CD8-positive, alpha-beta T cell (primary cell): ENCODE measurements at regions of chr12 and their contacts with region 1.

Region 1: DNA sequence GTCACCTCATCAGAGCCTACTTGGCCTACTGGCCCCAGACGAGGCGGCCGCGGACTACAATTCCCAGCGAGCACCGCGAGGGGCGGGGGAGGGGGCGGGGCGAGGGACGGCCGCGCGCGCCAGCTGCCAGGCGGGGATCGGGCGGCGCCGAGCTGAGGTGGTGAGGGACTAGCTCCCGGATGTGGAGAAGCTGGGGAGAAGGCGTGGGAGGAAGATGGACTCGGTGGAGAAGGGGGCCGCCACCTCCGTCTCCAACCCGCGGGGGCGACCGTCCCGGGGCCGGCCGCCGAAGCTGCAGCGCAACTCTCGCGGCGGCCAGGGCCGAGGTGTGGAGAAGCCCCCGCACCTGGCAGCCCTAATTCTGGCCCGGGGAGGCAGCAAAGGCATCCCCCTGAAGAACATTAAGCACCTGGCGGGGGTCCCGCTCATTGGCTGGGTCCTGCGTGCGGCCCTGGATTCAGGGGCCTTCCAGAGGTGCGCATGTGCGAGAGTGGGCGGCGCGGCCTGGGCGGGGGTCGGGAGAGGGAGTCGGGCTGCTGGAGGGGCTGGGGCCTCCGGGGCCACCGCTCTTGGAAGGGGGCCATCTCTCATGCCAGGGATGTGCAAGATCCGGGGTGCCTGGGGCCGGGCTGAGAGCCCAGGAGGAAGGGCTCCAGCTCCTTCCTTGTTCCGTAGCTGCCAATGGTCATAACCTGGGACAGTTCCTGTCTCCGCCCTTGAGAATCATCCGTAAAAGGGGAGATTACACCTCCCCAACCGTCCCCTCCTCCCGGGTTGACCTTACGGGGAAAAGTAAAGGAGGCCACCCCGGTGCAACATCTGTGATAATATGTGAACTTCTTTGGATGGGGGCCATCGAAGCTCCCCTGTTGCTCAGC is at the start of gene CMAS:
- DNase-seq: peak; percentile 63 to 89 (median 78)
- ATAC-seq: peak; percentile 90
- H3K4me3 ChIP-seq: peak within 1 kb of the TSS; percentile 71 to 91
- H3K4me3 Mint-ChIP-seq: peak within 1 kb of the TSS; percentile 95
- H3K27ac ChIP-seq: peak within 1 kb of the TSS; percentile 56 to 65
- H3K27ac Mint-ChIP-seq: peak within 1 kb of the TSS; percentile 91
- H3K4me1 ChIP-seq: peaks cover 16% of the 10 kb centered on the region
- H3K4me1 Mint-ChIP-seq: peaks cover 43% of the 10 kb centered on the region
- H3K27me3 ChIP-seq: peaks cover 0 to 2% of the 10 kb centered on the region in 2 experiments
- H3K27me3 Mint-ChIP-seq: no peaks in the 10 kb centered on the region
- CTCF ChIP-seq: no peak
- total RNA-seq, gene CMAS: 4.4 to 7.7 TPM

Region 2: DNA sequence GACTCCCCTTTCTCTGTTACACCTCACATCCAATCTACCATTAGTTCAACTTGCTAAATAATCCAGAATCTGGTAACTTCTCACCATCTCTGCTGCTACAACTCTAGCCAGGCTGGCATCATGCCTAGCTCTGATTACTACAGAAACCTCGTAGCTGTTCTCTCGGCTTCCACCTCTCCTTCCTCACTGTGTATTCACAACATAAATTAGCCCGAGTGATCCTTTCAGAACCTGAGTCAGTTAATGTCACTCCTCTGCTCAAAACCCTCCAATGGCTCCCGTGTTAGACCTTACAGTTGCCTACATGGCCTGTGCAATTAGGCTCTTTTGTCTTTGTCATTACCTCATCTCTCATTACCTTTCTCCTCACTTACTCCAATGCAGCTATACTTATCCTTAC is 1538.6 kb before region 1 on chr12:
- CTCF ChIA-PET with region 1: no interaction called
- POLR2A ChIA-PET with region 1: no interaction called
- intact Hi-C with region 1: no loop called
- DNase-seq: no peak
- ATAC-seq: no peak
- H3K4me3 ChIP-seq: no peak overlapping the region
- H3K4me3 Mint-ChIP-seq: no peak overlapping the region
- H3K27ac ChIP-seq: no peak overlapping the region
- H3K27ac Mint-ChIP-seq: no peak overlapping the region
- H3K4me1 ChIP-seq: no peaks in the 10 kb centered on the region
- H3K4me1 Mint-ChIP-seq: no peaks in the 10 kb centered on the region
- H3K27me3 ChIP-seq: no peaks in the 10 kb centered on the region
- H3K27me3 Mint-ChIP-seq: no peaks in the 10 kb centered on the region
- CTCF ChIP-seq: no peak

Region 3: GRCh38 chr12:21438643-21439042 is 607.7 kb before region 1 on chr12:
- CTCF ChIA-PET with region 1: no interaction called
- POLR2A ChIA-PET with region 1: no interaction called
- intact Hi-C with region 1: loop called in 1 of 2 experiments (anchors 5 kb)
- DNase-seq: peak in 1 of 9 experiments; percentile 27
- ATAC-seq: no peak
- H3K4me3 ChIP-seq: peak overlapping the region; percentile 91 to 95
- H3K4me3 Mint-ChIP-seq: peak overlapping the region; percentile 98
- H3K27ac ChIP-seq: peak overlapping the region; percentile 86 to 89
- H3K27ac Mint-ChIP-seq: peak overlapping the region; percentile 97
- H3K4me1 ChIP-seq: peaks cover 37% of the 10 kb centered on the region
- H3K4me1 Mint-ChIP-seq: peaks cover 46% of the 10 kb centered on the region
- H3K27me3 ChIP-seq: no peaks in the 10 kb centered on the region
- H3K27me3 Mint-ChIP-seq: no peaks in the 10 kb centered on the region
- CTCF ChIP-seq: no peak

Region 4: GRCh38 chr12:21501379-21501956 is 544.9 kb before region 1 on chr12 and contains the starts of genes GOLT1B and RECQL:
- CTCF ChIA-PET with region 1: no interaction called
- POLR2A ChIA-PET with region 1: no interaction called
- intact Hi-C with region 1: loop called (anchors 1 to 5 kb)
- DNase-seq: peak; percentile 74 to 98 (median 88)
- ATAC-seq: peak; percentile 94
- H3K4me3 ChIP-seq: peak within 1 kb of the TSS; percentile 89 to 95
- H3K4me3 Mint-ChIP-seq: no peak within 1 kb of the TSS
- H3K27ac ChIP-seq: peak within 1 kb of the TSS; percentile 83 to 84
- H3K27ac Mint-ChIP-seq: no peak within 1 kb of the TSS
- H3K4me1 ChIP-seq: peaks cover 35% of the 10 kb centered on the region
- H3K4me1 Mint-ChIP-seq: peaks cover 60% of the 10 kb centered on the region
- H3K27me3 ChIP-seq: no peaks in the 10 kb centered on the region
- H3K27me3 Mint-ChIP-seq: no peaks in the 10 kb centered on the region
- CTCF ChIP-seq: no peak
- total RNA-seq, gene GOLT1B: 45.2 to 52.9 TPM
- total RNA-seq, gene RECQL: 9.9 to 14.6 TPM

Region 5: DNA sequence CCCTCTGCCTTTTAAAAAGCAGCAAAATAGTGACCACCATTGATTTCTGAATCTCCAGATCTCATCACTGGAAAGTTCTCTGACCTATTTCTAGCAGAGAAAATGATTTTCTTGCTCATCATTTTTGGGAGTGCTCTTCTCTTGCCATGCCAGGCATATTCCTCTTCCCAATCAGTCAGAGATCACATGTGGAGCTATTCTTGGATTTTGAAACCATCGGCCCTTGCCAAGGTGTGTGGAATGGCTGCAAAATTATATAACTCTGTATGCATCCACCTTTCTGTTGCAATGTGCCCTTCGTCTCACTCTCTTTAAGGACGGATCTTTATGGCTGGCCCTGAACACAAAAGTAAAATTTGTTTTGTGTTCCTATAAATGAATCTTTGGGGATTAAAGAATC is 363.2 kb before region 1 on chr12:
- CTCF ChIA-PET with region 1: interaction called, 3 read pairs
- POLR2A ChIA-PET with region 1: no interaction called
- intact Hi-C with region 1: loop called in 1 of 2 experiments (anchors 10 kb)
- DNase-seq: no peak
- ATAC-seq: no peak
- H3K4me3 ChIP-seq: no peak overlapping the region
- H3K4me3 Mint-ChIP-seq: no peak overlapping the region
- H3K27ac ChIP-seq: no peak overlapping the region
- H3K27ac Mint-ChIP-seq: no peak overlapping the region
- H3K4me1 ChIP-seq: peaks cover 22% of the 10 kb centered on the region
- H3K4me1 Mint-ChIP-seq: peaks cover 23% of the 10 kb centered on the region
- H3K27me3 ChIP-seq: no peaks in the 10 kb centered on the region
- H3K27me3 Mint-ChIP-seq: peaks cover 2% of the 10 kb centered on the region
- CTCF ChIP-seq: no peak

Region 6: GRCh38 chr12:21891751-21892217 is 154.5 kb before region 1 on chr12:
- CTCF ChIA-PET with region 1: no interaction called
- POLR2A ChIA-PET with region 1: no interaction called
- intact Hi-C with region 1: no loop called
- DNase-seq: no peak
- ATAC-seq: no peak
- H3K4me3 ChIP-seq: no peak overlapping the region
- H3K4me3 Mint-ChIP-seq: no peak overlapping the region
- H3K27ac ChIP-seq: no peak overlapping the region
- H3K27ac Mint-ChIP-seq: no peak overlapping the region
- H3K4me1 ChIP-seq: no peaks in the 10 kb centered on the region
- H3K4me1 Mint-ChIP-seq: no peaks in the 10 kb centered on the region
- H3K27me3 ChIP-seq: peaks cover 0 to 1% of the 10 kb centered on the region in 2 experiments
- H3K27me3 Mint-ChIP-seq: no peaks in the 10 kb centered on the region
- CTCF ChIP-seq: no peak

Region 7: DNA sequence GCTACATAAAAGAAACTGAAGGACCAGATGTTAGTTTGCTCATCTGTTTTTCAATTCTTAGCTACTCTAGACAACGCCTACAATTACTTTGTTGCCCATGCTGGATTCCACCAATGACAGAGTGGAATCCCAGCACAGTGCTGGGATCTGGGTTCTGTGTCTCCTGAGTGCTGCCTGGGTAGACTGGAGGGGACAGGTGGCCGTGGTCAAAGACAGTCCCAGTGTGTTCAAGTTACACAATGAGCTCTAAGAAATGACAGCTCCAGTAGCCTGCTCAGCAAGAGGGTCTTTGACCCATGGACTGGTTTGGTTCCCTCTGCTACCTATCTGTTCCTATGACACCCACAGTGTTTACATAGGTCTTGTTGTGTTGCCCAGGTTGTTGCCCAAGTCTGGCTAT is 459.5 kb after region 1 on chr12:
- CTCF ChIA-PET with region 1: no interaction called
- POLR2A ChIA-PET with region 1: no interaction called
- intact Hi-C with region 1: no loop called
- DNase-seq: no peak
- ATAC-seq: no peak
- H3K4me3 ChIP-seq: no peak overlapping the region
- H3K4me3 Mint-ChIP-seq: no peak overlapping the region
- H3K27ac ChIP-seq: no peak overlapping the region
- H3K27ac Mint-ChIP-seq: no peak overlapping the region
- H3K4me1 ChIP-seq: no peaks in the 10 kb centered on the region
- H3K4me1 Mint-ChIP-seq: no peaks in the 10 kb centered on the region
- H3K27me3 ChIP-seq: no peaks in the 10 kb centered on the region
- H3K27me3 Mint-ChIP-seq: no peaks in the 10 kb centered on the region
- CTCF ChIP-seq: no peak

Region 8: GRCh38 chr12:22624870-22625761 is 578.8 kb after region 1 on chr12 and contains the start of gene ETNK1:
- CTCF ChIA-PET with region 1: no interaction called
- POLR2A ChIA-PET with region 1: no interaction called
- intact Hi-C with region 1: loop called (anchors 1 to 2 kb)
- DNase-seq: peak; percentile 70 to 90 (median 83)
- ATAC-seq: peak; percentile 93
- H3K4me3 ChIP-seq: peak within 1 kb of the TSS; percentile 84 to 98
- H3K4me3 Mint-ChIP-seq: peak within 1 kb of the TSS; percentile 99
- H3K27ac ChIP-seq: peak within 1 kb of the TSS; percentile 82 to 93
- H3K27ac Mint-ChIP-seq: peak within 1 kb of the TSS; percentile 99
- H3K4me1 ChIP-seq: peaks cover 28% of the 10 kb centered on the region
- H3K4me1 Mint-ChIP-seq: peaks cover 44% of the 10 kb centered on the region
- H3K27me3 ChIP-seq: peaks cover 0 to 2% of the 10 kb centered on the region in 2 experiments
- H3K27me3 Mint-ChIP-seq: peaks cover 2% of the 10 kb centered on the region
- CTCF ChIP-seq: no peak
- total RNA-seq, gene ETNK1: 17.1 to 23.3 TPM